ENCODE measurements at regions of chr10 and their contacts with region 1.

Region 1: GRCh38 chr10:58268870-58269605 is at the start of gene CISD1:
- DNase-seq: peak; percentile 96 to 98 (median 97)
- ATAC-seq: peak; percentile 90 to 96 (median 94)
- H3K4me3 ChIP-seq: peak within 1 kb of the TSS; percentile 49 to 89 (median 80)
- H3K27ac ChIP-seq: peak within 1 kb of the TSS; percentile 73 to 96 (median 94)
- H3K4me1 ChIP-seq: peaks cover 0 to 38% (median 21%) of the 10 kb centered on the region in 12 donors
- H3K27me3 ChIP-seq: no peaks in the 10 kb centered on the region
- CTCF ChIP-seq: no peak
- POLR2A ChIP-seq: peak in 1 of 2 donors; percentile 75
- total RNA-seq, gene CISD1: 73.9 to 179 (median 155) TPM

Region 2: GRCh38 chr10:58209669-58210068 is 59.4 kb before region 1 on chr10:
- intact Hi-C with region 1: loop called in 1 of 10 experiments (anchors 10 kb)
- DNase-seq: peak; percentile 42 to 83 (median 61)
- ATAC-seq: peak; percentile 42 to 78 (median 72)
- H3K4me3 ChIP-seq: no peak overlapping the region
- H3K27ac ChIP-seq: no peak overlapping the region
- H3K4me1 ChIP-seq: peaks cover 0 to 10% (median 0%) of the 10 kb centered on the region in 12 donors
- H3K27me3 ChIP-seq: no peaks in the 10 kb centered on the region
- CTCF ChIP-seq: no peak
- POLR2A ChIP-seq: no peak

Region 3: DNA sequence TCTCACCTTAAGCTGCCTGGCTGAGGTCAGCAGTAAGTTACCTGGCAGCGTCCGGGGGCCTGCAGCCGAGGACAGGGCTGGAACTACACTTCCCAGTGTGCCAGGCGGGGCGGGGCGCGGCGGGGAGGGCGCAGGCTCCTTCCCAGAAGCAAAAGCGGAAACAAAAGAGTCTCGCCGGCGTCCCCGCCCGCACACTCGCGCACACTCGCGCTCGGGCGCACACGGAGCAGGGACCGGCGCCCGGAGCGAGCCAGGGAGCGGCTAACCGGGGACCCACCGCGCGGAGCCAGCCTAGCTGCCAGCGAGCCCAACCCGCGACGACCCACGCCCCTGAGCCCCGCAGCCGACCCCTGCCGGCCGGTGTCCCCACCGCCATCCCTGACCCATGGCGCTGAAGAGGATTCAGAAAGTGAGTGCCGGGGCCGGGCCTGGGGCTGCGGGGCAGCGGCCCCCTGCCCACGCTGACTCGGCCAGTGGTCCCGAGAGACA is 65.8 kb after region 1 on chr10 and contains the start of gene UBE2D1:
- intact Hi-C with region 1: loop called in 3 of 10 experiments (anchors 5 kb)
- DNase-seq: peak; percentile 90 to 95 (median 93)
- ATAC-seq: peak; percentile 86 to 98 (median 96)
- H3K4me3 ChIP-seq: peak within 1 kb of the TSS; percentile 76 to 97 (median 90)
- H3K27ac ChIP-seq: peak within 1 kb of the TSS; percentile 83 to 97 (median 92)
- H3K4me1 ChIP-seq: peaks cover 0 to 44% (median 13%) of the 10 kb centered on the region in 12 donors
- H3K27me3 ChIP-seq: no peaks in the 10 kb centered on the region
- CTCF ChIP-seq: peak in 5 of 12 donors; percentile 16 to 30 (median 21)
- POLR2A ChIP-seq: peak; percentile 46 to 95
- total RNA-seq, gene UBE2D1: 30.8 to 84.2 (median 51.1) TPM